ENCODE measurements at regions of chr4 and their contacts with region 1.

Region 1: GRCh38 chr4:68375667-68376559 is 26.0 kb upstream of the YTHDC1 start:
- DNase-seq: peak in 8 of 9 donors; percentile 24 to 75 (median 64)
- ATAC-seq: peak; percentile 90
- H3K4me3 ChIP-seq: peak overlapping the region; percentile 23
- H3K4me3 Mint-ChIP-seq: peak overlapping the region; percentile 74 to 90 (median 82)
- H3K27ac ChIP-seq: no peak overlapping the region
- H3K27ac Mint-ChIP-seq: no peak overlapping the region
- H3K4me1 ChIP-seq: no peaks in the 10 kb centered on the region
- H3K4me1 Mint-ChIP-seq: peaks cover 5 to 18% (median 15%) of the 10 kb centered on the region in 7 donors
- H3K27me3 ChIP-seq: no peaks in the 10 kb centered on the region
- H3K27me3 Mint-ChIP-seq: peaks cover 0 to 41% (median 1%) of the 10 kb centered on the region in 5 donors

Region 2: DNA sequence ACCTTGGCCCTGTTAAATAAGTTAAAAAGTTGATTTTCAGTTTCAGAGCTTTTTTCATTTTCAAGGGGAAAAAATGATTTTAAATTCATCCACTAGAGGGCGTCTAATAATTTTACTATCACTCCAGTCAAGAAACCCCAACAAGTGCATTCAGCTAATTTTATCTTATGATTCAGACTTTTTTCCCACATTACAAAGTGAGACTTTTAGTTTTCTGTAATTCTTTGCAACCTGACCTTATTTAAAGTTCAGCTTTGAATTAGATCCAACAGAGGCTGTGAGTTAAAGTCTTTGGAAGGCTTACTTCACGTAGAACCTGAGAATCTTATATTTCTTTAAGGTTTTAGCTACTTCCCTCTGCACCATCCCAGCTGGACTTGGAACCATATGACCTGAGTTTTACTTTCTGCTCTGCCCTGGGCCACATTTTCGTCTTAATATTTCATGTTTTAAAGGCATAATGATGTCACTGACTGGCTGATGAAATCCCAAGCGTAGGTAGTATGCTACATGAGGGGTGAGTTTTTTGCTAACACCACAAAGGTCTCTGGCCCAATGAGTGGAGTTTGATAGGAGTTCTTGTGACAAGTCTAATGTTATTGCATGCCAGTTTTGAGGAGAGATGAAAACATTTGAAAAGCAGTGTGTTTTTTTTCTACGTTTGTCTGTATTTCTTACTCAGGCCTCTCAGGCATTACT is 629.0 kb before region 1 on chr4:
- CTCF ChIA-PET with region 1: interaction called, 3 read pairs
- POLR2A ChIA-PET with region 1: no interaction called
- intact Hi-C with region 1: loop called in 1 of 2 experiments (anchors 1 kb)
- DNase-seq: peak in 5 of 9 donors; percentile 27 to 48 (median 41)
- ATAC-seq: no peak
- H3K4me3 ChIP-seq: no peak overlapping the region
- H3K4me3 Mint-ChIP-seq: no peak overlapping the region
- H3K27ac ChIP-seq: no peak overlapping the region
- H3K27ac Mint-ChIP-seq: no peak overlapping the region
- H3K4me1 ChIP-seq: no peaks in the 10 kb centered on the region
- H3K4me1 Mint-ChIP-seq: peaks cover 0 to 14% (median 0%) of the 10 kb centered on the region in 7 donors
- H3K27me3 ChIP-seq: no peaks in the 10 kb centered on the region
- H3K27me3 Mint-ChIP-seq: no peaks in the 10 kb centered on the region

Region 3: DNA sequence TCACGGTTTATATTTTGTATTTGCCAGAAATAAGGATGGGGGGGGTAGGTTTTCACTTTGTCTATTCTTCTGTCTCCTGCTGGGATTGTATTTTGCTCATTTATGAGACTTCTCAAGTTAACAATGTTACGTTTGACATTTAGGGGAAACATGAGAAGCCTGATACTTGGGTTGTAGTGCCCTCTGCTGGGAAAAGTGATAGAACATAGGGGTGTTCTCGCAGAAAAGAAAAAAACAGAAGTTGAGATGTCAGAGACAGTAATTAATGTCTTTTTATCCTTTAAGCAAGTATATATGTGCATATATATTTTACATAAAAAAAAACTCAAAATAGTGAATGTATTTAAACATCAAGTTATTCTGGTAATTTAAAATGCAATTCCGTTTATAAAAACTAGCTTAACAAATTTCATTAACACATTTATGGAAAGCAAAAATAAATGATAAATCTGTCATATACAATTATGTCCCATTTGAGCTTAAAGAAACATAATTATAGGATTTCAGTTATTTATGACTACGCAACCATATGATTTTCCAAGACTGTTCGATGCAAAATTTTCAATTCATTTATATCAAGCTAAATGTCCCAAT is 200.3 kb before region 1 on chr4:
- CTCF ChIA-PET with region 1: no interaction called
- POLR2A ChIA-PET with region 1: no interaction called
- intact Hi-C with region 1: loop called in 1 of 2 experiments (anchors 5 kb)
- DNase-seq: peak in 6 of 9 donors; percentile 17 to 31 (median 22)
- ATAC-seq: no peak
- H3K4me3 ChIP-seq: no peak overlapping the region
- H3K4me3 Mint-ChIP-seq: no peak overlapping the region
- H3K27ac ChIP-seq: no peak overlapping the region
- H3K27ac Mint-ChIP-seq: no peak overlapping the region
- H3K4me1 ChIP-seq: no peaks in the 10 kb centered on the region
- H3K4me1 Mint-ChIP-seq: peaks cover 0 to 4% (median 0%) of the 10 kb centered on the region in 7 donors
- H3K27me3 ChIP-seq: no peaks in the 10 kb centered on the region
- H3K27me3 Mint-ChIP-seq: peaks cover 5 to 20% (median 12%) of the 10 kb centered on the region in 5 donors

Region 4: DNA sequence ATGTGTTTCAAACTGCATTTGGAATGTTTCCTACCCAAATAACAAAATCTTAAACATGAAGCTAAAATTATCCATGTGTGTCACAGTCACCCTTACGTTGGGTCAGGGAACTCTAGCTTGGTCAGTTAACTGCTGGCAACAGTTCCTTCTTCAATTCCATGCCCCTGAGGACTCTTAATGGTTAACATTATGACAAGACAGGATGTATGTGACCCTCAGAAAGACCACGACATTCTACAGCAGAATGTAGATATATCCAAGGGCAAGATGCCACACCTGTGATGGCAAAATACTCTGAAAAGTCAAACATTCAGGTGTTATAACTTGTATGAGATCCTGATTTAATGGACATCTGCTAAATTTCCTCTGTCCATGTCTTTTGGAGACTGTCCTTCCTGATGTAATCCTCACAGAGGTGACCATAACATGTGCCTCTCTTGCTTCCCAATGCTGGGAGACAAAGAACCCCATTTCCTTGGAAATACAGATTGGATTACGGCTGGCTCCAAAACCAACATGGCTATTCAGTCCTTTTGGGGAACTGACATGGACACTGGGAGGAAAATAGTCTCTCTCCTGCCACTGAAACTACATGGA is 65.2 kb before region 1 on chr4:
- CTCF ChIA-PET with region 1: interaction called, 3 read pairs
- POLR2A ChIA-PET with region 1: no interaction called
- intact Hi-C with region 1: loop called in 1 of 2 experiments (anchors 5 kb)
- DNase-seq: no peak
- ATAC-seq: peak; percentile 17
- H3K4me3 ChIP-seq: no peak overlapping the region
- H3K4me3 Mint-ChIP-seq: no peak overlapping the region
- H3K27ac ChIP-seq: no peak overlapping the region
- H3K27ac Mint-ChIP-seq: no peak overlapping the region
- H3K4me1 ChIP-seq: no peaks in the 10 kb centered on the region
- H3K4me1 Mint-ChIP-seq: peaks cover 0 to 4% (median 0%) of the 10 kb centered on the region in 7 donors
- H3K27me3 ChIP-seq: no peaks in the 10 kb centered on the region
- H3K27me3 Mint-ChIP-seq: peaks cover 0 to 17% (median 0%) of the 10 kb centered on the region in 5 donors

Region 5: GRCh38 chr4:68342134-68342533 is 33.8 kb before region 1 on chr4:
- CTCF ChIA-PET with region 1: interaction called, 6 read pairs
- POLR2A ChIA-PET with region 1: no interaction called
- intact Hi-C with region 1: loop called (anchors 5 kb)
- DNase-seq: no peak
- ATAC-seq: no peak
- H3K4me3 ChIP-seq: no peak overlapping the region
- H3K4me3 Mint-ChIP-seq: peak overlapping the region; percentile 2 to 99 (median 52)
- H3K27ac ChIP-seq: peak overlapping the region; percentile 16
- H3K27ac Mint-ChIP-seq: peak overlapping the region in 7 of 9 donors; percentile 4 to 76 (median 45)
- H3K4me1 ChIP-seq: peaks cover 50 to 55% of the 10 kb centered on the region in 2 donors
- H3K4me1 Mint-ChIP-seq: peaks cover 38 to 99% (median 80%) of the 10 kb centered on the region in 7 donors
- H3K27me3 ChIP-seq: no peaks in the 10 kb centered on the region
- H3K27me3 Mint-ChIP-seq: no peaks in the 10 kb centered on the region

Region 6: GRCh38 chr4:68359508-68359907 is 16.4 kb before region 1 on chr4:
- CTCF ChIA-PET with region 1: interaction called, 4 read pairs
- POLR2A ChIA-PET with region 1: no interaction called
- intact Hi-C with region 1: loop called in 1 of 2 experiments (anchors 2 kb)
- DNase-seq: no peak
- ATAC-seq: peak; percentile 69
- H3K4me3 ChIP-seq: no peak overlapping the region
- H3K4me3 Mint-ChIP-seq: peak overlapping the region in 7 of 10 donors; percentile 2 to 60 (median 39)
- H3K27ac ChIP-seq: peak overlapping the region; percentile 17
- H3K27ac Mint-ChIP-seq: peak overlapping the region in 6 of 9 donors; percentile 8 to 86 (median 52)
- H3K4me1 ChIP-seq: peaks cover 0 to 4% of the 10 kb centered on the region in 2 donors
- H3K4me1 Mint-ChIP-seq: peaks cover 0 to 13% (median 9%) of the 10 kb centered on the region in 7 donors
- H3K27me3 ChIP-seq: no peaks in the 10 kb centered on the region
- H3K27me3 Mint-ChIP-seq: peaks cover 0 to 28% (median 0%) of the 10 kb centered on the region in 5 donors

Region 7: DNA sequence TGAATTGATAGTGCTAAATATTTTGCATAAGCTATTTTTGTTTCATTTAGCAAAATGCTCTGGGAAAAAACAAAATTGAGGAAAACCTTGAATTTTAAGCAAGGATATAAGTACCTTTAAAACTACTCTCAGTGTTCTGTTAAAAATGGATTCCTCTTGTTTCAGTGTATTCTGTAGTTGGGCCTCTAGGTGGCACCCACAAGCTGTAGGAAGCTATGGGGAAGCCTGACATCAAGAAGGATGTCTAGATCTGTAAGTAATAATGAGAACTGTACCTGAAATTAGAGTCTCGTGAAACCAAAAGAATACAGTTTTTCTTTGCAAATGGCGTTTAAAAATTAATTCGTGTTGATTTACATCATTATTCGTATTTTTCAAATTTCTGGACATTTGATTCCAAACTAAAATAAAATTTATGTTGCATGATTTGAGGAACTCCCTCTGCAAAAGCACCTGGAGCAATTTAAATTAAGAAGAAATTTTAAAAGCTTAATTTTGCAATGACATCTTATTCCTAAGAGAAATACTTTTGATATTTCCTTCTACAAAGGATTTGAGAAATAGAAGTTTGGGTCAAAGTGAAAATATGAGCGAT is 122.6 kb after region 1 on chr4:
- CTCF ChIA-PET with region 1: interaction called, 3 read pairs
- POLR2A ChIA-PET with region 1: no interaction called
- intact Hi-C with region 1: loop called in 1 of 2 experiments (anchors 5 kb)
- DNase-seq: peak in 8 of 9 donors; percentile 28 to 67 (median 46)
- ATAC-seq: peak; percentile 94
- H3K4me3 ChIP-seq: no peak overlapping the region
- H3K4me3 Mint-ChIP-seq: no peak overlapping the region
- H3K27ac ChIP-seq: no peak overlapping the region
- H3K27ac Mint-ChIP-seq: no peak overlapping the region
- H3K4me1 ChIP-seq: no peaks in the 10 kb centered on the region
- H3K4me1 Mint-ChIP-seq: peaks cover 4 to 22% (median 11%) of the 10 kb centered on the region in 7 donors
- H3K27me3 ChIP-seq: no peaks in the 10 kb centered on the region
- H3K27me3 Mint-ChIP-seq: peaks cover 0 to 4% (median 0%) of the 10 kb centered on the region in 5 donors

Measured in naive thymus-derived CD4-positive, alpha-beta T cell (primary cell).